Motor neuron (in vitro differentiated cells): ENCODE measurements at regions of chr6 and their contacts with region 1.

Region 1: DNA sequence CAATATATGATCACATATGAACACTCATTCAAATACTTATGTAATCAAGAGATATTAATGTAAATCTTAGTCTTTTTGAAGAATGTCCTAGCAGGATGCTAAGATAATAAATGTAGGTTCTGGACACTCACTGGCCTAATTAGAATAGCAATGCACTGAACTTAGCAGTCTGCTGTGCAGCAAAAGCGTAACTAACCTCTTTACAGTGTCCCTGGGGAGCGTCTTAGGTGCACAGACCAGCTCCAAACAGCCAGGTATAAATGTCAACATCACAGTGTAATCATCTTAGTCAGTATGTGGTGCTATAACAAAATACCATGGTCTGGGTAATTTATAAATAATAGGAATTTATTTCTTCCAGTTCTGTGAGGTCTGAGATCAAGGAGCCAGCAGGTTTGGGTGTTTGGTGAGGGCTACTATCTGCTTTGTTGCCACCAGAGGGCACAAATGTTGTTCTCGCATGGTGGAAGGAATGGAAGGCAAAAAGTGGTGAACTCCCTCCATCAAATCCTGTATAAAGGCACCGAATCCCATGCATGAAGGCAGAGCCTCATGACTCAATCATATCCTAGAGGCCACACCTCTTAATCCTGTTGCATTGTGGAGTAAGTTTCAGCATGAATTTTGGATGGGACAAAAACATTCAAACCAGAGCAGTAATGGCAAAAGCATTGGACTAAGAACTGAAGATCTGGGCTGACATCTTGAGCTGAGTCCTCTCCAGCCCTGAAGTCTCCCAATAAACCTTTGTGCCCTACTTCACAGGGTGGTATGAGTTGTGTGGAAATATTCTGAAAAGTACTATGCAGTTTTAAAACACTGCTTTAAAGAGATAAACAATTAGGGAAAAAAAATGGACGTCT is 41.8 kb upstream of the FOXO3 start:
- ATAC-seq: peak in 3 of 8 experiments; percentile 73 to 100 (median 97)
- H3K4me3 ChIP-seq: no peak overlapping the region
- H3K27ac ChIP-seq: no peak overlapping the region
- H3K4me1 ChIP-seq: no peaks in the 10 kb centered on the region

Region 2: GRCh38 chr6:108074359-108075144 is 444.4 kb before region 1 on chr6 and contains the start of gene OSTM1:
- in situ Hi-C with region 1: loop called in 1 of 9 experiments (anchors 25 kb)
- ATAC-seq: peak; percentile 92 to 96 (median 94)
- H3K4me3 ChIP-seq: peak within 1 kb of the TSS; percentile 54 to 96 (median 73)
- H3K27ac ChIP-seq: peak within 1 kb of the TSS; percentile 54 to 57
- H3K4me1 ChIP-seq: peaks cover 3 to 7% of the 10 kb centered on the region in 2 donors
- total RNA-seq, gene OSTM1: 13.7 to 189 (median 27.2) TPM

Region 3: GRCh38 chr6:108302386-108302785 is 216.6 kb before region 1 on chr6:
- in situ Hi-C with region 1: no loop called
- ATAC-seq: no peak
- H3K4me3 ChIP-seq: no peak overlapping the region
- H3K27ac ChIP-seq: no peak overlapping the region
- H3K4me1 ChIP-seq: no peaks in the 10 kb centered on the region